HepG2 (cell line): ENCODE measurements at regions of chr16 and their contacts with region 1.

Region 1: GRCh38 chr16:48365581-48366164 is 19.5 kb downstream of the SIAH1 start:
- DNase-seq: peak; percentile 83
- ATAC-seq: peak; percentile 99
- H3K4me3 ChIP-seq: peak overlapping the region; percentile 72 to 87 (median 75)
- H3K27ac ChIP-seq: peak overlapping the region; percentile 81
- H3K4me1 ChIP-seq: peaks cover 45% of the 10 kb centered on the region
- H3K27me3 ChIP-seq: no peaks in the 10 kb centered on the region; a peak in 1 of 5 replicates
- CTCF ChIP-seq: peak; percentile 53
- EP300 ChIP-seq: no peak
- POLR2A ChIP-seq: peak; percentile 93 to 96
- RAD21 ChIP-seq: no peak

Region 2: GRCh38 chr16:48378836-48379235 is 13.2 kb after region 1 on chr16:
- CTCF ChIA-PET with region 1: no interaction called
- POLR2A ChIA-PET with region 1: interaction called, 80 read pairs
- in situ Hi-C with region 1: no loop called
- intact Hi-C with region 1: loop called (anchors 1 kb)
- DNase-seq: no peak
- ATAC-seq: no peak; the same call in 2 of the 3 replicates
- H3K4me3 ChIP-seq: no peak overlapping the region
- H3K27ac ChIP-seq: no peak overlapping the region
- H3K4me1 ChIP-seq: peaks cover 81% of the 10 kb centered on the region
- H3K27me3 ChIP-seq: no peaks in the 10 kb centered on the region; a peak in 1 of 5 replicates
- CTCF ChIP-seq: no peak
- EP300 ChIP-seq: no peak
- POLR2A ChIP-seq: no peak
- RAD21 ChIP-seq: no peak